ENCODE measurements at regions of chr7 and their contacts with region 1.

Region 1: DNA sequence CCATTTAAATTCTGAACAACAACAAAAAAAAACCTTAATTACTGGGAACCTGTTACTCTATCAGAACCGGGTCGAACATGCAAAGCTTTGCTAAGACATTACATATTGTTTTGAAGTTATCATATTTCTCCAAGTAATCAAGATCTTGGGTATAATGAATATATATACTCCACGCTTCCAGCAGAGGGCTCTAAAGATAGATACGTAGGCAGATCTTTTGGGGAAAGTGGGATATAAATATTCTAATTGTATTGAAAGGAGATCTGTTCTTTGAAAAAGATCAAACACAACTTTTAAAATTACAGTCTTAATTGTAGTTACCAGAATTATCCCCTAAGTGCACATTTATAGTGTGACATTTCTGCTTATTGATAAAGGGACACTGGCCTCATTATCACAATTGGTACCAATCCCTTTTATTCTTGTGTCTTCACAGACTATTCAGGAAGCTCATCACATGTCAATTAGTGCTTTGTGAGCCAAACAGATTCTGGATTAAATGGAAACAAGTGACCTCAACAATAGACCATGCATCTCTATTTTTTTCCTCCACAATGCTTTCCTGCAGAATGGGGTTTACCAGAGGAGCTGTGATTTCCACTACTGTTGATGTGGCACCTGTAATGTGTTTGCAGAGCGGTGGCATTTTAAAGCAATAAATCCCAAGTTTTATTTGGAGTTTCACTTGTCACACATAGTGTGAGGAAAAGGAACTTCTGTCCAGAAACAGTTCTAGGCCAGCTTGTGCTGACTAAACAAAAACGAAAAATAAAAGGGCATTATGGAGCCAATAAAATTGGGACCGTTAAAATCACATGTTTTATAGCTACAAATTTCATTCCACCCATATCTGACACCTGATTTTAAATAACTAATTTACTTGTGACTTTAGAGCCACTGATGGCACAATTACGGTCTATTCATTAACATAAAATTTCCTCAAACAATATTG is 122.4 kb downstream of the CTTNBP2 start:
- DNase-seq: no peak
- ATAC-seq: peak; percentile 51; the same call in 1 of the 3 replicates
- H3K4me3 ChIP-seq: no peak overlapping the region
- H3K27ac ChIP-seq: no peak overlapping the region
- H3K4me1 ChIP-seq: no peaks in the 10 kb centered on the region
- H3K27me3 ChIP-seq: peaks cover 0 to 3% of the 10 kb centered on the region in 2 experiments; a peak in 2 of 4 replicates
- CTCF ChIP-seq: peak; percentile 23 to 53 (median 41); a peak in 4 of 6 replicates
- EP300 ChIP-seq: no peak
- POLR2A ChIP-seq: no peak
- RAD21 ChIP-seq: peak; percentile 68

Region 2: DNA sequence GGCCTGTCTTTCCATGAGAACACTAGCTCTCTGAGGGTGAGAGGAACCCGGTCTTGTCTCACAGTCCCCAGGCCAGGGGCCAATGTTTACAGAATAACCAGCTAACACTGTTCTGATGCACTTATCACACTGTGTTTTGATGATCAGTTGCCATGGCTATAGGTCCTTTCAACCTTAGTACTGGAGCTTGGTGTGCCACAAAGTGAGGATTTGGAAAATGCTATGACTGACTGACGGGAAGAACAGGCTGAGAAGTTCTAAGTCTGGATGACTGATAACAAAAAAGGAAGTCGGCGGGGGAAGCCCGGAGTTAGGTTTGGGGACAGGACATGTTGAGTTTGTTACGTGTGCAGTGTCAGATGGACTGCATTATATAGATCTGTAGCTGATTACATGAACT is 19.4 kb before region 1 on chr7:
- CTCF ChIA-PET with region 1: interaction called, 7 read pairs
- POLR2A ChIA-PET with region 1: no interaction called
- RAD21 ChIA-PET with region 1: interaction called, 6 read pairs
- SMC1A ChIA-PET with region 1: interaction called, 18 read pairs
- in situ Hi-C with region 1: no loop called
- intact Hi-C with region 1: no loop called
- DNase-seq: peak; percentile 66
- ATAC-seq: peak; percentile 86
- H3K4me3 ChIP-seq: no peak overlapping the region
- H3K27ac ChIP-seq: no peak overlapping the region
- H3K4me1 ChIP-seq: no peaks in the 10 kb centered on the region
- H3K27me3 ChIP-seq: no peaks in the 10 kb centered on the region; a peak in 1 of 4 replicates
- CTCF ChIP-seq: no peak
- EP300 ChIP-seq: peak; percentile 54 to 80; a peak in 3 of 4 replicates
- POLR2A ChIP-seq: no peak
- RAD21 ChIP-seq: no peak

Region 3: GRCh38 chr7:117777335-117778150 is 26.7 kb after region 1 on chr7:
- CTCF ChIA-PET with region 1: interaction called, 18 read pairs
- POLR2A ChIA-PET with region 1: no interaction called
- RAD21 ChIA-PET with region 1: interaction called, 3 read pairs
- SMC1A ChIA-PET with region 1: interaction called, 7 read pairs
- in situ Hi-C with region 1: no loop called
- intact Hi-C with region 1: no loop called
- DNase-seq: no peak
- ATAC-seq: no peak
- H3K4me3 ChIP-seq: no peak overlapping the region
- H3K27ac ChIP-seq: no peak overlapping the region
- H3K4me1 ChIP-seq: peaks cover 30% of the 10 kb centered on the region
- H3K27me3 ChIP-seq: no peaks in the 10 kb centered on the region
- CTCF ChIP-seq: no peak
- EP300 ChIP-seq: no peak
- POLR2A ChIP-seq: no peak
- RAD21 ChIP-seq: no peak

Region 4: GRCh38 chr7:118057404-118057803 is 306.5 kb after region 1 on chr7:
- CTCF ChIA-PET with region 1: no interaction called
- POLR2A ChIA-PET with region 1: no interaction called
- RAD21 ChIA-PET with region 1: no interaction called
- SMC1A ChIA-PET with region 1: no interaction called
- in situ Hi-C with region 1: no loop called
- intact Hi-C with region 1: no loop called
- DNase-seq: no peak
- ATAC-seq: no peak
- H3K4me3 ChIP-seq: no peak overlapping the region
- H3K27ac ChIP-seq: no peak overlapping the region
- H3K4me1 ChIP-seq: no peaks in the 10 kb centered on the region; the same call in 1 of the 2 replicates
- H3K27me3 ChIP-seq: no peaks in the 10 kb centered on the region
- CTCF ChIP-seq: no peak
- EP300 ChIP-seq: no peak
- POLR2A ChIP-seq: no peak
- RAD21 ChIP-seq: no peak

Region 5: GRCh38 chr7:118104812-118105441 is 354.0 kb after region 1 on chr7:
- CTCF ChIA-PET with region 1: interaction called, 3 read pairs
- POLR2A ChIA-PET with region 1: no interaction called
- RAD21 ChIA-PET with region 1: interaction called, 4 read pairs
- SMC1A ChIA-PET with region 1: interaction called, 5 read pairs
- in situ Hi-C with region 1: no loop called
- intact Hi-C with region 1: loop called (anchors 1 kb)
- DNase-seq: no peak
- ATAC-seq: peak; percentile 80
- H3K4me3 ChIP-seq: no peak overlapping the region
- H3K27ac ChIP-seq: no peak overlapping the region
- H3K4me1 ChIP-seq: no peaks in the 10 kb centered on the region
- H3K27me3 ChIP-seq: no peaks in the 10 kb centered on the region
- CTCF ChIP-seq: peak; percentile 42 to 62 (median 52); a peak in 5 of 6 replicates
- EP300 ChIP-seq: no peak
- POLR2A ChIP-seq: no peak
- RAD21 ChIP-seq: peak; percentile 63

Region 6: GRCh38 chr7:118153551-118154177 is 402.8 kb after region 1 on chr7:
- CTCF ChIA-PET with region 1: interaction called, 31 read pairs
- POLR2A ChIA-PET with region 1: no interaction called
- RAD21 ChIA-PET with region 1: interaction called, 4 read pairs
- SMC1A ChIA-PET with region 1: interaction called, 3 read pairs
- in situ Hi-C with region 1: loop called (anchors 5 kb)
- intact Hi-C with region 1: loop called (anchors 1 kb)
- DNase-seq: no peak
- ATAC-seq: peak; percentile 66
- H3K4me3 ChIP-seq: no peak overlapping the region
- H3K27ac ChIP-seq: no peak overlapping the region
- H3K4me1 ChIP-seq: no peaks in the 10 kb centered on the region
- H3K27me3 ChIP-seq: no peaks in the 10 kb centered on the region
- CTCF ChIP-seq: peak; percentile 55 to 68 (median 61); a peak in 5 of 6 replicates
- EP300 ChIP-seq: no peak
- POLR2A ChIP-seq: no peak
- RAD21 ChIP-seq: peak; percentile 72

Region 7: DNA sequence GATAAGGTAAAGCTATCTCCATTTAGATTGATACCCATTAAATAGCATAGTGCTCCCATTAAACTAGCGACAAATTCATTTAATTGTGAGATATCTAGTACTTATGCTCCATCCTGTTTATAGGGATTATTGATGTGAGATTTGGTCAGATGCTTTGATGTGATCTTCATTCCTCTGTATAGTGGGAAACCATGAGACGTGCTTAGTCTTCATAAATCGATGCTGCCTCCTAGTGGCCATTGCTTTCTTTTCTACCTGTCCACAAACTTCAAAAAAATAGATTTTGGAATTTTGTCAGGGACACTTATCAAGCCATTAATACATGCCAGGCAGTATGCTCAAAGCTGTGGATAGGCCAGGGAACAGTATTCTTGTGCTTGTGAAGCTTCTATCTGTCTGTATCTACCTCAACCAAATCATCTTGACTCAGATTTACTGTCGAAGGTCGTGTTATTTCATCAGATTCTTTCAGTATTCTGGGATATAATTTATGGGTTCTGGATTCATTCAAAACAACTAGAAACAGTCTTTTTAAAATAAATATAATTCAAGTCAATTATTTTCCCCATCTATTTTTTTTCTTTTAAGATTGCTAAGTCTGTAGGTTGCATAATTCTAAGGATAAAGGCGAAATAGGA is 445.1 kb after region 1 on chr7:
- CTCF ChIA-PET with region 1: interaction called, 16 read pairs
- POLR2A ChIA-PET with region 1: no interaction called
- RAD21 ChIA-PET with region 1: interaction called, 3 read pairs
- SMC1A ChIA-PET with region 1: interaction called, 4 read pairs
- in situ Hi-C with region 1: no loop called
- intact Hi-C with region 1: no loop called
- DNase-seq: no peak
- ATAC-seq: peak; percentile 90
- H3K4me3 ChIP-seq: no peak overlapping the region
- H3K27ac ChIP-seq: no peak overlapping the region
- H3K4me1 ChIP-seq: no peaks in the 10 kb centered on the region
- H3K27me3 ChIP-seq: no peaks in the 10 kb centered on the region
- CTCF ChIP-seq: peak; percentile 69 to 75 (median 74)
- EP300 ChIP-seq: no peak
- POLR2A ChIP-seq: no peak
- RAD21 ChIP-seq: peak; percentile 66